GM12878 (cell line): ENCODE measurements at regions of chr1 and their contacts with region 1.

Region 1: DNA sequence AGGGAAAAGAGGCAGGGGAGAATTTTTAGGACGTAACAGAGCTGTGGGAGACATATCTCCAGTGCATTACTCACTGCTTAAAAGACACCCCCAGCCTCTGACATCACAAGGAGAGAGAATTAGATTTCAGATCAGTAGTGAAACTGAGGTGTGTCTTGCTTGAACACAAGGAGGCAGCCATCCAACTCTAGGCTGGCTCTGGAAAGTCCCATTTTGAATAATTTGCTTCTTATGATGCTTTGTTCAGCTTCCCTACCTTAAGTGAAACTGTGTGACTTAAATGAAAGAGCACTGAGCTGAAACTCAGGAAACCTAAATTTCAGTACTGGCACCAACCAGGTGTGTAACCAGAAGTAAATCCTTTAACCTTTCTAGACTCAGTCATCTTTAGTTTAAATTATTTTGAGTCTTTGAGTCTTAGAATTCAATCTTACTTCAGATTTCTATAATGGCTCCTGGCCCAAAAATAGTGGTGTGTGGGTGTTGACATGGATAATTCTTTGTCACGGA is 251.6 kb upstream of the SGIP1 start:
- DNase-seq: peak; percentile 98
- ATAC-seq: peak; percentile 75
- H3K4me3 ChIP-seq: peak overlapping the region; percentile 18; the same call in 1 of the 2 replicates
- H3K27ac ChIP-seq: peak overlapping the region; percentile 97
- H3K4me1 ChIP-seq: peaks cover 49% of the 10 kb centered on the region
- H3K27me3 ChIP-seq: no peaks in the 10 kb centered on the region
- CTCF ChIP-seq: peak; percentile 21 to 52 (median 25); a peak in 4 of 6 replicates
- EP300 ChIP-seq: peak; percentile 98 to 99
- POLR2A ChIP-seq: no peak
- RAD21 ChIP-seq: peak; percentile 45; the same call in 1 of the 2 replicates

Region 2: DNA sequence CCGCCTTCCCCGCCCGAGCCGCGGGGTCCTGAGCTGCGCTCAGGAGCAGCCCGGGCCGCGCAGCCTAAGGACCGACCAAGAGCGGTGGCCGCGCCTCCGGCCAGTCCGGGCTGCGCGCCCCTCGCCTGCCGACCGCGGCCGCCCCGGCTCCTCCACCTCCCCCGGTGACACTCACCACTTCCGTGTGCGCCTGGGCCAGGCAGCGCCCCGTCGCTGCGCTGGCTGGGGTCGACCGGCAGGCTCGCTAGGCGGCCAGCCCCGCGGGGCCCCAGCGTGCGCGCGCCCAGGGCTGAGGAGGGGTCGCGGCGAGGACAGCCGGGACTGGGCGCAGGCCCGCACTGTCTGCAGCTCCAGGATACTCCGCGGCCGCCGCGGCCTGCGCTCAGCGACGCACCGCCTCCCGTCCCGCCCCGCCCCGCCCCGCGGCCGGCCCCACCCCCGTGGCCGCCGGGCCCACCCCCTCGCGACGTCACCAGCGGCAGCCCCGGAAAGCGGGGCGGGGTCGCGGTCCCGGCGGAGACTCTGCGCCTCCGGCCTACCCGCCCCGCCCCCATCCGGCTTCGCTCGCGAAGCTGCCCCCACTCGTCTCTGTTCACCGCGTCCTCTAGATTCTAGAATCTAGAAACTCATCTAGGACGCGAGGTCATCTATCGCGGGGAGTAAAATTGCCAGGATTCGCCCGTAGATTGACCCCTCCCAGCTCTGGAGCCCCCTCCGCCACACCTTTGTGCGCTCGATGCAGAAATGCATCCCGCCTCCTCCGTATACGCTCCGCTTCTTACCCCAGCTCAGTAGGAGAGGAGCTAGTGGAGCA is 1316.0 kb before region 1 on chr1 and contains the start of gene JAK1:
- CTCF ChIA-PET with region 1: no interaction called
- POLR2A ChIA-PET with region 1: no interaction called
- RAD21 ChIA-PET with region 1: no interaction called
- SMC1A ChIA-PET with region 1: no interaction called
- in situ Hi-C with region 1: no loop called
- intact Hi-C with region 1: loop called (anchors 10 kb)
- DNase-seq: no peak
- ATAC-seq: peak; percentile 80
- H3K4me3 ChIP-seq: peak within 1 kb of the TSS; percentile 98
- H3K27ac ChIP-seq: peak within 1 kb of the TSS; percentile 86
- H3K4me1 ChIP-seq: peaks cover 28% of the 10 kb centered on the region
- H3K27me3 ChIP-seq: no peaks in the 10 kb centered on the region
- CTCF ChIP-seq: no peak
- EP300 ChIP-seq: 0 out of 4 replicates have a peak, but pooled peaks of 1 of the 2 experiments have one; percentile 15
- POLR2A ChIP-seq: peak; percentile 83
- RAD21 ChIP-seq: no peak
- polyA plus RNA-seq, gene JAK1: 9.6 to 11.5 TPM

Region 3: DNA sequence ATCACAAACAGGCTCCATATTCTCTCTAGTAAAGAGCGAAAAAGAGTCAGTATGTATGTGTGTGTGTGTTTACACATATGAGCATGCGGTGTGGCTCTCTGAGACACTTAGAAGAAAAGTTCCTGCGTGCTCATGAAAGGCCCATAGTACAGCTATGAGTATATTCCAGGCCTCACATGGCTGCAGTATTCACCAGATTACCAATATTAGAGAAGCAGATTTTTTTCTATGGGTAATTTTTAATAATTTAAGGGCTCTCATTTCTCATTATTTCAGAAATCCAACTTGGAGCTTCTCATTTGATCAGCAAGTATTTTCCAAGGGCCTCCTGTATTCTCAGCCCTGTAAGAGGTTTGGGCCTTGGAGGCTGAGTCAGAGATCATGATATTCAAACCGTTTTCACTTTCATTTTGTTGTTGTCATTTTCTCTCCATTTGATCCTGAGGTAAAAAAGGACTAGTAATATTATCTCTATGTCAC is 18.6 kb after region 1 on chr1:
- CTCF ChIA-PET with region 1: interaction called, 7 read pairs
- POLR2A ChIA-PET with region 1: interaction called, 5 read pairs
- RAD21 ChIA-PET with region 1: interaction called, 12 read pairs
- SMC1A ChIA-PET with region 1: interaction called, 209 read pairs
- in situ Hi-C with region 1: no loop called
- intact Hi-C with region 1: no loop called
- DNase-seq: peak; percentile 53
- ATAC-seq: peak; percentile 92
- H3K4me3 ChIP-seq: peak overlapping the region; percentile 56; the same call in 1 of the 2 replicates
- H3K27ac ChIP-seq: peak overlapping the region; percentile 63
- H3K4me1 ChIP-seq: peaks cover 22% of the 10 kb centered on the region; the same call in 1 of the 2 replicates
- H3K27me3 ChIP-seq: no peaks in the 10 kb centered on the region
- CTCF ChIP-seq: no peak
- EP300 ChIP-seq: no peak
- POLR2A ChIP-seq: no peak
- RAD21 ChIP-seq: no peak

Region 4: GRCh38 chr1:66350001-66350547 is 67.7 kb after region 1 on chr1:
- CTCF ChIA-PET with region 1: interaction called, 37 read pairs
- POLR2A ChIA-PET with region 1: interaction called, 6 read pairs
- RAD21 ChIA-PET with region 1: interaction called, 56 read pairs
- SMC1A ChIA-PET with region 1: interaction called, 100 read pairs
- in situ Hi-C with region 1: no loop called
- intact Hi-C with region 1: loop called (anchors 2 kb)
- DNase-seq: no peak
- ATAC-seq: peak; percentile 64
- H3K4me3 ChIP-seq: peak overlapping the region; percentile 52; the same call in 1 of the 2 replicates
- H3K27ac ChIP-seq: peak overlapping the region; percentile 88
- H3K4me1 ChIP-seq: peaks cover 56% of the 10 kb centered on the region
- H3K27me3 ChIP-seq: no peaks in the 10 kb centered on the region
- CTCF ChIP-seq: no peak
- EP300 ChIP-seq: peak; percentile 98 to 99
- POLR2A ChIP-seq: 0 out of 2 replicates have a peak, but pooled peaks have one; percentile 31
- RAD21 ChIP-seq: no peak

Region 5: DNA sequence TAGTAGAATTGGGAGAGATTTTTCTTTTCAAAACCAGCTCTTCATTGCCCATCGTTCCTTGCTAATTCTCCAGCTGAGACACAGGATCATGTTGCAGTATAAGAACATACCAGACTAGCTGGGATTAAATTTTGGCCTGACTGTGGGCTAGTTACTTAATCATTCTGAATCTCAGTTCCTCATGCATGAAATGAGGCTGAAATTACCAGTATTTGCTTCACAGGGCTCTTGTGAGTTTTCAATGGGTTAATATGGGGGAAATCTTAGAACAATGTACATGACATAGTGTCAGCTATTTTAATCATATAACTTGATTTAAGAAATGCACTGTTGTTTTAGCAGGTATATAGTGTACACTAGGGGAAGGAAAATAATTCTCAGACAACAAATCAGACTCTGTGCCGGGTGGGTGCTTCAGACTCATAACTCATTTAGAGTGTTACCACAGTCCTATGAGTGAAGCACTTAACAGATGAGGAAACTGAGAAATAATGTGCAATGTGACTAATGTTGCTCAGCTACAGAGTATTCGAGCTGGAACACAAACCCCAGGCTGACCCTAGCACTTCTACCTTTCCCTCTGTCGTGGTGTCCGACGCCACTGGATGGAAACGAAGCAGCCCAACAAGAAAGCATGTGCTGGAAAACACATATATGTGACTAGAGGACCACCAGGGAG is 114.0 kb after region 1 on chr1:
- CTCF ChIA-PET with region 1: interaction called, 5 read pairs
- POLR2A ChIA-PET with region 1: interaction called, 9 read pairs
- RAD21 ChIA-PET with region 1: interaction called, 23 read pairs
- SMC1A ChIA-PET with region 1: interaction called, 14 read pairs
- in situ Hi-C with region 1: no loop called
- intact Hi-C with region 1: loop called (anchors 1 kb)
- DNase-seq: peak; percentile 71
- ATAC-seq: peak; percentile 76
- H3K4me3 ChIP-seq: no peak overlapping the region
- H3K27ac ChIP-seq: peak overlapping the region; percentile 80
- H3K4me1 ChIP-seq: peaks cover 75% of the 10 kb centered on the region
- H3K27me3 ChIP-seq: no peaks in the 10 kb centered on the region
- CTCF ChIP-seq: no peak
- EP300 ChIP-seq: peak in 1 of 2 experiments; percentile 52; a peak in 2 of 4 replicates
- POLR2A ChIP-seq: no peak
- RAD21 ChIP-seq: no peak; the same call in 1 of the 2 replicates

Region 6: DNA sequence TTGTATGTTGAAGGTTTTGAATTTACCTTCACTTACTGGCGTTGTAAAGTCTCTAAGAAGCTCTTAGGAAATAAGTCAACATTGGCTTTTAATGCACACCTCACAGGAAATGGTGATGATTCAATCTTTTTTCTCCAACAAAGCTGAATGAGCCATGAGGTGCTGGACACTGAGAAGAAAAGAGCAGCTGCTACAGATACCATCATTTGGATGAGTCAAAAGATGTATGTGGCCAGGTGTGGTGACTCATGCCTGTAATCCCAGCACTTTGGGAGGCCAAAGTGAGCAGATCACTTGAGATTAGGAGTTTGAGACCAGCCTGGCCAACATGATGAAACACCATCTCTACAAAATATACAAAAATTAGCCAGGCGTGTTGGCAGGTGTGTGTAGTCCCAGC is 880.6 kb after region 1 on chr1:
- CTCF ChIA-PET with region 1: no interaction called
- POLR2A ChIA-PET with region 1: no interaction called
- RAD21 ChIA-PET with region 1: no interaction called
- SMC1A ChIA-PET with region 1: no interaction called
- in situ Hi-C with region 1: loop called (anchors 25 kb)
- intact Hi-C with region 1: no loop called
- DNase-seq: no peak
- ATAC-seq: peak; percentile 53
- H3K4me3 ChIP-seq: no peak overlapping the region
- H3K27ac ChIP-seq: no peak overlapping the region
- H3K4me1 ChIP-seq: peaks cover 3% of the 10 kb centered on the region; the same call in 1 of the 2 replicates
- H3K27me3 ChIP-seq: no peaks in the 10 kb centered on the region
- CTCF ChIP-seq: no peak
- EP300 ChIP-seq: no peak; a peak in 1 of 4 replicates
- POLR2A ChIP-seq: no peak
- RAD21 ChIP-seq: no peak

Region 7: DNA sequence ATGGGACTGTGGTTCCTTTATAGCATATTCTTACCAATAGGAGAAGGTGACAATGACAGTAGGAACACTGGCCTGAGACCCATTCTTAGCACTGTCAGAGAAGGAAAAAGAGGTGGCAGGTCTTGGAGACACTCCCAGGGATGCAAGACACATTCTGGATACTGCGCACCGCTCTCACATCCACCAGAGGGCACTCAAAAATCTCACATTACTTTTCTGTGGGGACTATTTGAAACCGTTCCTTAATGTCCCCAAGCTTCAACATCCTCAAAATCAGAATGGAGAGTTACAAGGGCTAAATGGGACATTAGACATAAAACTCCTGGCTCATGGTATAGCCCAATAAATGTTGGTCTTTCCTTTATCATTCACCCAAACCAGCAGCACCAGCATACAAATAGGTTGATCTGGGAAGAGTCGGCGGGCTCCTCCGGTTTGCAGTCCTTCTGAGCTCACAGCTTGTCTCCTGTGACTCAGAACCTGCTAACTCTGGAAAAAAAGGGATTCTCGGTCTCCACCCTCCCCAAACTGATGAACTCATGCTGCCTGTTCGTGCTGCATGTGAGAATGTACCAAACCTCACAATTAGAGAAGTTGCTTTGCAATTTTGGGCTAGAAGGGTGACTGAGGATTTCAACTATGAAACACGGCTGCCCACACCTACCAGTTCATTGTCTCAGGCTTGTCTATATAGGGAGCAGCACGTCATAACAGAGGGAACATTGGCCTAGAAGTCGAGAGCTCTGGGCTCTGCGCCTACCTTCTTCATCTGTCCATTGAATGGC is 1065.5 kb after region 1 on chr1:
- CTCF ChIA-PET with region 1: no interaction called
- POLR2A ChIA-PET with region 1: no interaction called
- RAD21 ChIA-PET with region 1: no interaction called
- SMC1A ChIA-PET with region 1: no interaction called
- in situ Hi-C with region 1: loop called (anchors 25 kb)
- intact Hi-C with region 1: no loop called
- DNase-seq: no peak
- ATAC-seq: peak; percentile 85
- H3K4me3 ChIP-seq: no peak overlapping the region
- H3K27ac ChIP-seq: no peak overlapping the region
- H3K4me1 ChIP-seq: peaks cover 7% of the 10 kb centered on the region
- H3K27me3 ChIP-seq: no peaks in the 10 kb centered on the region
- CTCF ChIP-seq: peak; percentile 62 to 70 (median 68)
- EP300 ChIP-seq: no peak
- POLR2A ChIP-seq: no peak
- RAD21 ChIP-seq: peak; percentile 71